CD8-positive, alpha-beta memory T cell (primary cell): ENCODE measurements at regions of chr7 and their contacts with region 1.

Region 1: DNA sequence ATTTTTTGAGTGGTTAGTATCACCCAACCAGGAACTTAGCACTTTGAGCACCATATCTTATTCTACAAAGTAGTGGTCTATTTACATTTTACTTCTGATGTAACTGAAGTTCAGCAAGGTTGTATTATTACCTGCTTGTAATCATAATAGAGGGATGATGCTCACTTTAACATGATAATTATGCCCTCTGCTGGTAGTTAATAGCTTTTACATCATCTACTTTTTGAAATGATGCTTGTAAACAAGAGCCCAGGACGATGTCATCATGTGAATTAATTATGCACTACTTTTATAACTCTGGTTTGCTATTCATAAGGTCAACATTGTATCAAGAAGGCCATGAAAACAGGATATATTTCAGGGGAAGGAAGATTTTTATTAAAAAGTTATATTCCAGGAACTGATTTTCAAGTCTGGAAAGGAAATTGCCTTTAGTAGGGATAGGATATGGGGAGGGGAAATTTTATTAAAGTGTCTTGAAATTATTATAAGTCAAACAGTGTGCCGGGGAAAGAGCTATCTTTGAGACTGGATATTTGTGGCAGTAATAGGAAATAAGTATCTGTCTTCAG is 80.3 kb upstream of the SCIN start:
- DNase-seq: peak in 1 of 5 donors; percentile 11
- H3K4me3 ChIP-seq: no peak overlapping the region
- H3K4me3 Mint-ChIP-seq: no peak overlapping the region
- H3K27ac ChIP-seq: no peak overlapping the region
- H3K27ac Mint-ChIP-seq: no peak overlapping the region
- H3K4me1 ChIP-seq: no peaks in the 10 kb centered on the region
- H3K4me1 Mint-ChIP-seq: peaks cover 0 to 4% (median 0%) of the 10 kb centered on the region in 3 donors
- H3K27me3 ChIP-seq: no peaks in the 10 kb centered on the region
- H3K27me3 Mint-ChIP-seq: peaks cover 0 to 5% of the 10 kb centered on the region in 2 donors

Region 2: GRCh38 chr7:12458520-12459131 is 31.6 kb before region 1 on chr7:
- CTCF ChIA-PET with region 1: interaction called, 19 read pairs
- POLR2A ChIA-PET with region 1: no interaction called
- DNase-seq: peak in 2 of 5 donors; percentile 4 to 12
- H3K4me3 ChIP-seq: no peak overlapping the region
- H3K4me3 Mint-ChIP-seq: no peak overlapping the region
- H3K27ac ChIP-seq: no peak overlapping the region
- H3K27ac Mint-ChIP-seq: no peak overlapping the region
- H3K4me1 ChIP-seq: no peaks in the 10 kb centered on the region
- H3K4me1 Mint-ChIP-seq: no peaks in the 10 kb centered on the region
- H3K27me3 ChIP-seq: no peaks in the 10 kb centered on the region
- H3K27me3 Mint-ChIP-seq: peaks cover 4 to 9% of the 10 kb centered on the region in 2 donors